Activated T-helper 1 cell treated with anti-CD3 and anti-CD28 coated beads, Interleukin-12 subunit alpha, Interleukin-12 subunit beta, Interleukin-2, Interleukin-4 antibody, amounts not matched to agents 30 ng/mL and 10 ng/mL and 1 ng/mL, durations not matched to agents 14 hours and 24 hours and 36 hours (primary cell): ENCODE measurements at regions of chr13 and their contacts with region 1.

Region 1: GRCh38 chr13:32472194-32472621 is 44.3 kb upstream of the N4BP2L1 start:
- DNase-seq: no peak
- H3K4me3 Mint-ChIP-seq: no peak overlapping the region
- H3K27ac Mint-ChIP-seq: peak overlapping the region; percentile 82
- H3K4me1 Mint-ChIP-seq: peaks cover 20% of the 10 kb centered on the region
- H3K27me3 Mint-ChIP-seq: no peaks in the 10 kb centered on the region

Region 2: GRCh38 chr13:31038834-31039552 is 1433.2 kb before region 1 on chr13:
- intact Hi-C with region 1: no loop called
- DNase-seq: peak; percentile 29
- H3K4me3 Mint-ChIP-seq: peak overlapping the region; percentile 56
- H3K27ac Mint-ChIP-seq: peak overlapping the region; percentile 70
- H3K4me1 Mint-ChIP-seq: peaks cover 36% of the 10 kb centered on the region
- H3K27me3 Mint-ChIP-seq: peaks cover 23% of the 10 kb centered on the region

Region 3: GRCh38 chr13:32581177-32581786 is 109.1 kb after region 1 on chr13:
- intact Hi-C with region 1: loop called (anchors 1 kb)
- DNase-seq: no peak
- H3K4me3 Mint-ChIP-seq: no peak overlapping the region
- H3K27ac Mint-ChIP-seq: no peak overlapping the region
- H3K4me1 Mint-ChIP-seq: peaks cover 12% of the 10 kb centered on the region
- H3K27me3 Mint-ChIP-seq: peaks cover 19% of the 10 kb centered on the region

Region 4: GRCh38 chr13:32838945-32839344 is 366.7 kb after region 1 on chr13:
- intact Hi-C with region 1: no loop called
- DNase-seq: peak; percentile 14
- H3K4me3 Mint-ChIP-seq: no peak overlapping the region
- H3K27ac Mint-ChIP-seq: no peak overlapping the region
- H3K4me1 Mint-ChIP-seq: peaks cover 20% of the 10 kb centered on the region
- H3K27me3 Mint-ChIP-seq: no peaks in the 10 kb centered on the region